ENCODE measurements at regions of chr11 and their contacts with region 1.

Region 1: DNA sequence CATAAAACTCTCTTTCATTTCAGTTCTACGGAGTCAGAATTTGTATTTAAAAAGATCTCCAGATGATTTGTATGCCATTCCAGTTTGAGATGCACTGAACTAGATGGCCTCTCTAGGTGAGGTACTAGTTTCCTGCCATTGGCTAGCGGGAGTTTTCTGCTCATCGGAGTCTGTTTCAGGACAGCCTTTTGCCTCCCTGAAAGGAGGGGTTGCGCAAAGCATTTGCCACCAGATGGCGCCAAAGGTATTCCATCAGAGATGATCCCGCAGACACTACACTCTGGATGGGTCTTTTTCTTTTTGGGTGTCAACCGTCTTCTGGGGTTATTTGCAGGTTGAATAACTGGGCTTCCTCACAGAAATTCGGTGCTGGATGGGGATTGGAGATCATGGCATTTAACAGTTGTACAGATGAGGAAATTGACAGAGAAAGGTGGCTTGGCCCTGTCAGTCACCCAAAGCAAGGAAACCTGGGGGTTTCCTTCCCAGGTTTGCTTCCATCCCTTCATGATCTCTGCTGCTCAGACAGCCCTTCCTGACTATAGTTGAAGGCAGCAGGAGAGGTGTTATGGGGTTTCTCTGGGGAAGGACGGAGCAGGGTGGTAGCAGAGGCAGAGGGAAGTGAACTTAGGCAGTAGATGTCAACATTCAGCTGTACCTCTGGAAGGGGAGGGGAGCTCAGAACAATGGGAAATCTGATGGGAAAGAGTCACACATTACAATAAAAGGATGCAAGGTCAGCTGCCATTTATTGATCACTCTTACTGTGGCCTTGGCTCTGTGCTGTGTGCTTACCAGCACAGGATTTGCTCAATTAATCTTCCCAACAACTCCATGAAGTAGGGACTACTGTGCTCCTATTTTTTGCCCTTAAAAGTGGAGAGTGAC is 81.6 kb downstream of the CCDC81 start:
- DNase-seq: peak; percentile 78
- ATAC-seq: peak; percentile 89
- H3K4me3 ChIP-seq: no peak overlapping the region
- H3K27ac ChIP-seq: peak overlapping the region; percentile 91
- H3K4me1 ChIP-seq: peaks cover 40% of the 10 kb centered on the region
- H3K27me3 ChIP-seq: no peaks in the 10 kb centered on the region
- CTCF ChIP-seq: peak; percentile 95

Region 2: GRCh38 chr11:86515297-86516094 is 59.2 kb after region 1 on chr11:
- CTCF ChIA-PET with region 1: interaction called, 3 read pairs
- POLR2A ChIA-PET with region 1: no interaction called
- in situ Hi-C with region 1: no loop called
- intact Hi-C with region 1: loop called (anchors 5 kb)
- DNase-seq: peak; percentile 75
- ATAC-seq: peak; percentile 92
- H3K4me3 ChIP-seq: no peak overlapping the region
- H3K27ac ChIP-seq: peak overlapping the region; percentile 72
- H3K4me1 ChIP-seq: peaks cover 68% of the 10 kb centered on the region
- H3K27me3 ChIP-seq: no peaks in the 10 kb centered on the region
- CTCF ChIP-seq: no peak

Region 3: DNA sequence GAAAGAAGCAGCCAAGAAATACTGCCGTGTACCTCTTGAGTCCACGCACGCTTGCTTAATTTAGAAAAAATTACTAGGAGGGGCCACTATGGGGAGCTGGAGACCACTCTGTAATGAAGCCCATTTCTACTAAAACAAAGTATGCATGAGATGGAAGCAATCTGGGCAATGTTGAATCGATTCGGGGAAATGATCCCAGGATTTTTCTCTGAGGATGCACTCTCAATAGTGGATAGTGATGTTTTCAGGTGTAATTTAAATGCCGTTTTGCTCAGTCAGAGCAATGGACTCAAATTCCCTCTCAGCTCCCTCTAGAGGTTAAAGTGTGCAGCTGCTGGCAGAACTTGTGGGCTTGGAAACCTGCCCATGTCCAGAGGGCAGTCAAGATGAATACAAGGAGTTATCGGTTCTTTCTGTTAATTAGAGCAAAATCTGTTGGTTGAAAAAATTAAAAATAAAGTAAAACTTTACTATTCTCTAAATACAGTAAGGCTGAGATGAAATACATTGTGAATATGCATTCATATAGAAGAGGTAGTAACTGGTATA is 152.0 kb after region 1 on chr11:
- CTCF ChIA-PET with region 1: interaction called, 6 read pairs
- POLR2A ChIA-PET with region 1: no interaction called
- in situ Hi-C with region 1: no loop called
- intact Hi-C with region 1: loop called (anchors 1 kb)
- DNase-seq: no peak
- ATAC-seq: peak; percentile 75
- H3K4me3 ChIP-seq: peak overlapping the region in 1 of 2 experiments; percentile 21; a peak in 2 of 4 replicates
- H3K27ac ChIP-seq: peak overlapping the region; percentile 78
- H3K4me1 ChIP-seq: peaks cover 52% of the 10 kb centered on the region
- H3K27me3 ChIP-seq: no peaks in the 10 kb centered on the region
- CTCF ChIP-seq: peak; percentile 100

Region 4: GRCh38 chr11:86740709-86741483 is 284.6 kb after region 1 on chr11:
- CTCF ChIA-PET with region 1: no interaction called
- POLR2A ChIA-PET with region 1: no interaction called
- in situ Hi-C with region 1: no loop called
- intact Hi-C with region 1: loop called (anchors 10 kb)
- DNase-seq: peak; percentile 97
- ATAC-seq: peak; percentile 51
- H3K4me3 ChIP-seq: no peak overlapping the region
- H3K27ac ChIP-seq: peak overlapping the region; percentile 99
- H3K4me1 ChIP-seq: peaks cover 79% of the 10 kb centered on the region
- H3K27me3 ChIP-seq: no peaks in the 10 kb centered on the region
- CTCF ChIP-seq: no peak

Region 5: GRCh38 chr11:86919557-86920210 is 463.4 kb after region 1 on chr11:
- CTCF ChIA-PET with region 1: no interaction called
- POLR2A ChIA-PET with region 1: no interaction called
- in situ Hi-C with region 1: no loop called
- intact Hi-C with region 1: loop called (anchors 2 kb)
- DNase-seq: no peak
- ATAC-seq: peak; percentile 72
- H3K4me3 ChIP-seq: no peak overlapping the region
- H3K27ac ChIP-seq: no peak overlapping the region
- H3K4me1 ChIP-seq: peaks cover 10% of the 10 kb centered on the region
- H3K27me3 ChIP-seq: no peaks in the 10 kb centered on the region
- CTCF ChIP-seq: peak; percentile 84